HEK293T (cell line): ENCODE measurements at regions of chr22 and their contacts with region 1.

Region 1: DNA sequence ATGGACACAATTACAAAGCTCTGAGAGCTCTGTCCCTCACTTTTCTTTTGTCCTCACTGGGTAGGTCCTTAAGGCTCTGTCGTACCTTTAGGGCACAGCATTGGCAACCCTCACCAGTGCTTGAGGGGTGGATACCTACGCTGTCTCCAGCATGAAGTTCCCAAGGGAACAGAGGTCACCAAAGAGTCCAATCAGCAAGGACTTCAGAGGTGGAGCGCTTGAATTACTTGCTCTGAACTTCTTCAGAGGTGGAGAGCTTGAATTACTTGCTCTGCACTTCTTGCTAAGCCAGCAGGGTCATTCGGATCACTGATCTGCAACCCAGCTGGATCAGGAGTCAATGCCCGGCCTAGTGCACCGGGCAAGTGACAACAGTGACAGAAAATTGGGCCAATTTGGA is 35.1 kb downstream of the RRP7A start:
- DNase-seq: no peak

Region 2: DNA sequence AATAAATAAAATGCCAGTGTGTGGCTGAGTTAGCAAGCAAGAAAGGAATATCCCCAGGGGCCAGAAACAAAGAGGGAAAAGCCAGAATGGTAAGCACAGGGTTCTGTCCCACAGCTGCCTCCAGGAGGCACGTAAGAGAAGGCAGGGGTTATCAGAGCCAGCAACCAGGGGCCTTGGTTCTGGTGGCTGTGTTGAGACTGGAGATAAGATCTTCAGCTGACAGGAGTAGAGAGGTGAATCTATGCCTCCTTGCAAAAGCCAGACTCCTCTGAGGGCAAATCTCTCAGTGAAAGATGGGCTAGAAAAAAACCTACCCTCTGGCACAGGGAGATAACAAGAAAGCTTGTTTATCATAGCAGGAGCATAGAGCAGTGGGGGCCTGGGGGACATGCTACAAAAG is 22.5 kb before region 1 on chr22:
- CTCF ChIA-PET with region 1: no interaction called
- POLR2A ChIA-PET with region 1: no interaction called
- DNase-seq: no peak

Region 3: DNA sequence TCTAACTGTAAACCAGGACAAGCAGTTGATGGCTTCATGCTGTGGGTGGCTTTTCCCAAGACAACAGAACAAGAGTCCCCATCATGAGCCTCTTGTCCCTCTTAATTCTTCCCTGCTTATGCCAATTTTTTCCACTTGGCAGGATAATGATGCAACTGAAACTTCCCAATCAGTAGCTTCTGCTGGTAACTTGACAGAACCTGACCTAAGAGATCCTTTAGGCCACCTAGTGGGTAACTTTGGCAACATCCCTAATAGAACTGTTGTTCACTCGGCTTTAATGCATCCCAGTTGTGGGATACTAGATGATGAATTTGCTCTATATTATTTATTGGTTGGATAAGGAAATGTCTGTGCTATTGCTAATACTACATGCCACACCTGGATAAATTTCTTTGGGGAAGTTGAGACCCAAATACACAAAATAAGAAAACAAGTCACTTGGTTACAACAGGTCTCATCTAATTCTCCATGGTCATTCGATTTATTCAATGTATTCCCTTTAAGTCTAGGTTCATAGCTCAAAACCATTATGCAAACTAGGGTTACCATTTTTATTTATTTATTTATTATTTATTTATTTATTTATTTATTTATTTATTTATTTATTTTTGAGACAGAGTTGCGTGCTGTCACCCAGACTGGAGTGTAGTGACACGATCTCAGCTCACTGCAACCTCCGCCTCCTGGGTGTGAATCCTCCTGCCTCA is 10.9 kb before region 1 on chr22:
- CTCF ChIA-PET with region 1: interaction called, 11 read pairs
- POLR2A ChIA-PET with region 1: no interaction called
- DNase-seq: peak; percentile 61